Heart left ventricle (tissue), 16 donors: ENCODE measurements at regions of chr4 and their contacts with region 1.

Region 1: GRCh38 chr4:70704331-70705145 is 16.2 kb downstream of the UTP3 start:
- DNase-seq: peak; percentile 89 to 91 (median 90)
- ATAC-seq: peak; percentile 83 to 94 (median 88)
- H3K4me3 ChIP-seq: peak overlapping the region; percentile 71 to 93 (median 84)
- H3K27ac ChIP-seq: peak overlapping the region; percentile 84 to 98 (median 95)
- H3K4me1 ChIP-seq: peaks cover 0 to 25% (median 15%) of the 10 kb centered on the region in 12 donors
- H3K27me3 ChIP-seq: no peaks in the 10 kb centered on the region
- CTCF ChIP-seq: peak in 8 of 12 donors; percentile 14 to 55 (median 42)
- POLR2A ChIP-seq: peak in 1 of 2 donors; percentile 51

Region 2: GRCh38 chr4:70603856-70604255 is 100.7 kb before region 1 on chr4:
- intact Hi-C with region 1: no loop called
- DNase-seq: no peak
- ATAC-seq: no peak
- H3K4me3 ChIP-seq: no peak overlapping the region
- H3K27ac ChIP-seq: no peak overlapping the region
- H3K4me1 ChIP-seq: no peaks in the 10 kb centered on the region
- H3K27me3 ChIP-seq: no peaks in the 10 kb centered on the region
- CTCF ChIP-seq: no peak
- POLR2A ChIP-seq: no peak

Region 3: DNA sequence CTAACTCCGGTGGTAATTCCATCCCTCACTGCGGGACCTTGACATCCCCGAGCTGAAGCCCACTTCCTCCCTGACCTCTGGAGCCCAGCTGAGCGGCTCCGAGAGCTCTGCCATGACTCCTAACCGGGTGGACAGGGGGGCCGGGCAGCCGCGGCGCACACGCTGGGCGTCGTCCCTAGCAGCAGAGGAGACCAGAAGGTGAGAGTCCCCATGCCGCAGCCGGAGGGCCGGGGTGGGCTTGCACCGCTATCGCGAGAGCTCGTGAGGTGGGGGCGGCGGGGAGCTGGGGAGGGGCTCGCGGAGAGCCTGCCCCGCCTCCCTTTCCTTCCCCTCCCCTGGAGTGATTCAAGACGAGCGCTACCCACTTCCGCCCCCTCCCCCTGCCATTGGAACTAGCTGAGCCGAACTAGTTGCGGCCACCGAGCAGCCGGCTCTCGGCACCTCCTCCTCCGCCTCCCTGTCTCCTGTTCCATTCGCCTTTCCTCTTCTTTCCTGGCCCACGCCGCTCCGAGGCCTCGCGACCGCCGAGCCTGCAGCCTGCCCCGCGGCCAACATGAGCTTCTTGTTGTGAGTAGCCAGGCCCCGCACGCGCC is 197.5 kb after region 1 on chr4 and contains the start of gene MOB1B:
- intact Hi-C with region 1: loop called in 1 of 10 experiments (anchors 10 kb)
- DNase-seq: peak; percentile 89 to 93 (median 93)
- ATAC-seq: peak; percentile 93 to 98 (median 98)
- H3K4me3 ChIP-seq: peak within 1 kb of the TSS; percentile 70 to 98 (median 84)
- H3K27ac ChIP-seq: peak within 1 kb of the TSS; percentile 75 to 94 (median 92)
- H3K4me1 ChIP-seq: peaks cover 0 to 26% (median 9%) of the 10 kb centered on the region in 12 donors
- H3K27me3 ChIP-seq: no peaks in the 10 kb centered on the region
- CTCF ChIP-seq: peak in 10 of 12 donors; percentile 10 to 65 (median 46)
- POLR2A ChIP-seq: peak in 1 of 2 donors; percentile 61
- total RNA-seq, gene MOB1B: 11.1 to 22.9 (median 18.6) TPM

Region 4: DNA sequence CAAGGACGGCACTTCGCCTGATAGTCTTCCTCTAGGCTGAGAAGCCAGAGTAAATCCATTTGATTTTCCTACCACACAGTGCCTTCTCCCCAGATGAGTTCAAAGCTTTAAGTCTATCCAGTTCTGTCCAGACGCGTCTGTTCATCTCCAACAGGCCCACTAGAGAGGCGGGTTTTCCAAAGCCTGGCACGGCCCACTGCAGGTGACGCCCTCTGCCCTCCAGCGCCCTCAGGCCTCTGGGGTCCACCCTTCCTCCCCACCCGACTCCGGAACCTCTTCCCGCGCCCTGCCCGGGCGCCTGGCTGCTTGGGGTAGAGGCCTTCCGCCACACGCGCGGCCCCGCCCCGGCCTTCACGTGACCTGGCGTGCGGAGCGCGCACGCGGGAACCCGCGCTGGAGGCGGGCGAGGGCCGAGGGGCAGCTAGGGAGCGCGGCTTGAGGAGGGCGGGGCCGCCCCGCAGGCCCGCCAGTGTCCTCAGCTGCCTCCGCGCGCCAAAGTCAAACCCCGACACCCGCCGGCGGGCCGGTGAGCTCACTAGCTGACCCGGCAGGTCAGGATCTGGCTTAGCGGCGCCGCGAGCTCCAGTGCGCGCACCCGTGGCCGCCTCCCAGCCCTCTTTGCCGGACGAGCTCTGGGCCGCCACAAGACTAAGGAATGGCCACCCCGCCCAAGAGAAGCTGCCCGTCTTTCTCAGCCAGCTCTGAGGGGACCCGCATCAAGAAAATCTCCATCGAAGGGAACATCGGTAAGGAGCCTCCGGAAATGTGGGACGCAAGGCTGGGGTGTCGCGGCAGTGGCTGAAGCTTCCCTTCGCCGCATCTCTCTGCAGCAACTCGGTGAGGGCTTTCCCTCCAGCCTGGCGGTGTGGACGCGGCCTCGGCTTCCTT is 288.9 kb after region 1 on chr4 and contains the start of gene DCK:
- intact Hi-C with region 1: loop called in 2 of 10 experiments (anchors 5 to 10 kb)
- DNase-seq: peak; percentile 92 to 96 (median 93)
- ATAC-seq: peak; percentile 96 to 99 (median 98)
- H3K4me3 ChIP-seq: peak within 1 kb of the TSS; percentile 40 to 93 (median 81)
- H3K27ac ChIP-seq: peak within 1 kb of the TSS; percentile 71 to 95 (median 87)
- H3K4me1 ChIP-seq: peaks cover 0 to 54% (median 18%) of the 10 kb centered on the region in 12 donors
- H3K27me3 ChIP-seq: no peaks in the 10 kb centered on the region
- CTCF ChIP-seq: peak in 1 of 12 donors; percentile 29
- POLR2A ChIP-seq: peak in 1 of 2 donors; percentile 72
- total RNA-seq, gene DCK: 4.6 to 12.6 (median 6.8) TPM